Activated B cell treated with CpG ODN at 0.5 μM for 24 hours (primary cell): ENCODE measurements at regions of chr7 and their contacts with region 1.

Region 1: DNA sequence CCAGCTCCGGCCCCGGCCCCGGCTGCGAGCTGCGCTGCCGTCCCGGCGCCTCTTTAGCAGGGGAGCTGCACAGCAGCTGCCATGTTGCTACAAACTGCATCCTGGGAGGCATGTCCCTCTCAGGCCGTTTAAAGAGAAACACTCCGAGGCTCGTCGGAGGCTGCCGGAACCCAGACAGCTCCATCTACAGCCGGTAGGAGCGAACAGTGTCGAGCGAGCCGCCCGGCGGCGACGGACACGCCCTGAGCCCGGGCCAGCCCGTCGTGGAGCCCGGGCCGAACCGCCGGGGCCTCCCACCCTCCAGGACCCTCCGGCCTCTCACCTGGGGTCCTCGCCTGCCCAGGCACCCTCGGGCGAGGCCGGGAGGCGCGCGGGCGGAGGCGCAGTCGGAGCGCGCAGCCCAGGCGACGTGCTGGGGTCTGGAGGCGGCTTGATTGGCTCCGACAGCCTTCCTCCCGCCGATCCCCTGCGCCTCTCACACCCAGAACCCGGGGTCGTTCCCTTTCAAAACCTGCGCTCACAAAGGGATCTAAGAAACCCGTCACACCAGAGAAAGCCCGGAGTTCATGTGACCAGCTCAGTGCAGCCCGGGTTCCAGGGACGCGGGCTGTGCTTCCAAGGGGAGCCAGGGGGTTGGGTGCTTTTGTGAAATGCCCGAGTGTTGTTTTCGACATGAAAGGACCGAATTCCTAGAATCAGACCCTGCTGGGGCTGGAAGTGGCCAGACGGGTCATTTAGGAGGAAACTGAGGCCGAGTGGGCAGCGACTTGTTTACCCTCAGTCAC is at the start of gene ZNF777:
- DNase-seq: peak; percentile 69
- ATAC-seq: peak; percentile 97
- H3K4me3 Mint-ChIP-seq: peak within 1 kb of the TSS; percentile 87
- H3K27ac Mint-ChIP-seq: peak within 1 kb of the TSS; percentile 65
- H3K4me1 Mint-ChIP-seq: peaks cover 24% of the 10 kb centered on the region
- H3K27me3 Mint-ChIP-seq: peaks cover 9% of the 10 kb centered on the region
- CTCF ChIP-seq: no peak
- total RNA-seq, gene ZNF777: 14.0 and 16.2 TPM in 2 replicates

Region 2: GRCh38 chr7:149284850-149285626 is 175.6 kb before region 1 on chr7:
- CTCF ChIA-PET with region 1: no interaction called
- POLR2A ChIA-PET with region 1: no interaction called
- intact Hi-C with region 1: loop called (anchors 1 kb)
- DNase-seq: peak; percentile 95
- ATAC-seq: peak; percentile 99
- H3K4me3 Mint-ChIP-seq: peak overlapping the region; percentile 89
- H3K27ac Mint-ChIP-seq: no peak overlapping the region
- H3K4me1 Mint-ChIP-seq: peaks cover 27% of the 10 kb centered on the region
- H3K27me3 Mint-ChIP-seq: no peaks in the 10 kb centered on the region
- CTCF ChIP-seq: no peak

Region 3: GRCh38 chr7:149440222-149440621 is 20.5 kb before region 1 on chr7:
- CTCF ChIA-PET with region 1: no interaction called
- POLR2A ChIA-PET with region 1: no interaction called
- intact Hi-C with region 1: no loop called
- DNase-seq: no peak
- ATAC-seq: no peak
- H3K4me3 Mint-ChIP-seq: no peak overlapping the region
- H3K27ac Mint-ChIP-seq: no peak overlapping the region
- H3K4me1 Mint-ChIP-seq: no peaks in the 10 kb centered on the region
- H3K27me3 Mint-ChIP-seq: no peaks in the 10 kb centered on the region
- CTCF ChIP-seq: no peak

Region 4: DNA sequence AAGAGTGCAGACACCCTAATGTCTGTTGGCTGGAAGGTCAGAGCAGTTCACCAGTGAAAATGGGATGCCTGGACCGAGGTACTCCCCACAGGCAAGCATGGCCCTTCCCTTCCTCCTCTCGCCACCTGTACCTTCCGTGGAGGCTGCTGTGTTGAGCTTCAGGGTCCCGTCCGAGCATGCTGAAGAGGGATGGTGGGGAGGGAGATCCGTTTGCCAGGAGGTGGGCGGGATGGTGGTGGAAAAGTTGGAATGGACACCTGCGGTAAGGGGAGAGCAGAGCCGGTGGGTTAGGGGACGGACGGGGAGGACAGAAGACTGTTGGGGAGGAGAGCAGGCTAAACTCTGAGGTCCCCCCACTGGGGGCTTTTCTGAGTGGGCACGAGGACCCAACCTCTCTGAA is 16.1 kb after region 1 on chr7:
- CTCF ChIA-PET with region 1: no interaction called
- POLR2A ChIA-PET with region 1: no interaction called
- intact Hi-C with region 1: no loop called
- DNase-seq: no peak
- ATAC-seq: no peak
- H3K4me3 Mint-ChIP-seq: no peak overlapping the region
- H3K27ac Mint-ChIP-seq: no peak overlapping the region
- H3K4me1 Mint-ChIP-seq: no peaks in the 10 kb centered on the region
- H3K27me3 Mint-ChIP-seq: no peaks in the 10 kb centered on the region
- CTCF ChIP-seq: no peak

Region 5: GRCh38 chr7:149569025-149569725 is 108.5 kb after region 1 on chr7:
- CTCF ChIA-PET with region 1: no interaction called
- POLR2A ChIA-PET with region 1: no interaction called
- intact Hi-C with region 1: no loop called
- DNase-seq: no peak
- ATAC-seq: no peak
- H3K4me3 Mint-ChIP-seq: no peak overlapping the region
- H3K27ac Mint-ChIP-seq: no peak overlapping the region
- H3K4me1 Mint-ChIP-seq: peaks cover 2% of the 10 kb centered on the region
- H3K27me3 Mint-ChIP-seq: no peaks in the 10 kb centered on the region
- CTCF ChIP-seq: no peak

Region 6: DNA sequence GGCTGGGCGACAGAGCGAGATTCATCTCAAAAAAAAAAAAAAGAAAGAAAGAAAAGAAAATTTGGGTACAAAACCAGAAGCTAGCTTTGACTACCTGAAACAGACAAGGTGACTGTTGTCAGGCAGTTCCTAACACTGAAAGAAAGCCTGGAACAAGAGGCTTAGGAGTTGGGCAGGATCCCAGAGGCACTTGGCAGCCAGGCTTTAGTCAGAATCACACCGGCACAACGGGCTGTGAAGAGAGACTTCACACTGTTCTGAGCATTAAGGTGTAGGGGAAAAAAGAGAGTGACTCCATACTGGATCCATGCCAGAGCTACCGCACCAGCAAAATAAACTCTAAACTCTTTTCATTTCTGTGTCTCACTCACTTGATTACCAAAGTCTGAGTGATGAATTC is 181.9 kb after region 1 on chr7:
- CTCF ChIA-PET with region 1: no interaction called
- POLR2A ChIA-PET with region 1: no interaction called
- intact Hi-C with region 1: no loop called
- DNase-seq: no peak
- ATAC-seq: no peak
- H3K4me3 Mint-ChIP-seq: no peak overlapping the region
- H3K27ac Mint-ChIP-seq: no peak overlapping the region
- H3K4me1 Mint-ChIP-seq: no peaks in the 10 kb centered on the region
- H3K27me3 Mint-ChIP-seq: peaks cover 25% of the 10 kb centered on the region
- CTCF ChIP-seq: no peak